AG04449 (cell line): ENCODE measurements at regions of chr12 and their contacts with region 1.

Region 1: DNA sequence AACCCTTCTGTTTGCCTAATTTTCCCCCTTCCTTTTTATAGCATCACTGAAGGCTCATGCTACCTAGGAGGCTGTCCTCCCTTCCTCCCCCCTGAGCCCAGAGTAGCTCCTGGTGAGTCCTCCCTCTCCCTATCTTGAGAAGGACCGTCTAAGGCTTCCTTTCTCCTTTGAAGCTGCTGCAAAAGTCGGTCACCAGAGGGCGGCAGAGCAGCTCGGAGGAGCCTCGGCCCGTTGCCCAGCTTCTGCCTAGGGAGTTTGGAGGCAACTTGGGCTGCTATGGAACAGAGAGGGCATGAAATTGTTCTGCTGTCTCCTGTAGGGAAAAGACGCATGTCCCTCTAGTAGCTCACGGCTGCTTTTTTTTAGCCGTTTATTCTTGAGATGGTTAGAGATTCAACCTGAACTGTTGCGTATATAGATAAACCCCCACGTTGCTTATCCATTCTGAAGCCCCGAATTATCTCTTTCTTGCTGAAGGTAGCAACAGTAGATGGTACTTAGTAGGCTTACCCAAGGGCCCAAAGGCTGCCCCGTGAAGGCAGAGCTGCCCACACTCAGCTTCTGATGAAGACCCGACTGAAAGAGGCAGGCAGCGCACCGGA is 5.7 kb downstream of the WNT5B start:
- DNase-seq: no peak
- H3K4me3 ChIP-seq: no peak overlapping the region
- CTCF ChIP-seq: peak; percentile 94

Region 2: DNA sequence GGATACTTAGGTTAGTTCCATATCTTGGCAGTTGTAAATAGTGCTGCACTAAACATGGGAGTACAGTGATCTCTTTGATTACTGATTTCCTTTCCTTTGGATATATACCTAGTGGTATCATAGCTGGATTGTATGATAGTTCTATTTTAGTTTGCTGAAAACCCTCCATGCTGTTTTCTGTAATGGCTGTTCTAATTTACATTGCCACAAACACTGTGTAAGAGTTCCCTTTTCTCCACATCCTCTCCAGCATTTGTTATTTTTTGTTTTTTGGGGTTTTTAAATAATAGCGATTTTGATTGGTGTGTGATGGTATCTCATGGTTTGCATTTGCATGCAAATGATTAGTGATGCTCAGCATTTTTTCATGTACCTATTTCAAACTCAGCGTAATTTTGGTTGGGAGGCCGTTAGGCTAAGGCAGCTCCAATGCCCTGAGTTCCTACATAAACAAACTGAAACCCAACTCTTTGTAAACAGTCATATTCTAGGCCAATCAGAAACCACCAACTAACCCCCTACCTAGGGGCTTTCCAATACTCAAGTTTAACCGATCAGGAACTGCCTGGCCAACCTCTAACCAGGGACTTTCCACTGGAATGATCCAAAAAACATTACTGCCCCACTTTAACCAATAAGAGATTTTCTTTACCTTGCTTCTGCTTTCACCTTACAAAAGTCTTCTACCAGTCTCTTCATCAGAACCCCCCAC is 211.9 kb before region 1 on chr12:
- CTCF ChIA-PET with region 1: no interaction called
- POLR2A ChIA-PET with region 1: no interaction called
- DNase-seq: no peak
- H3K4me3 ChIP-seq: no peak overlapping the region
- CTCF ChIP-seq: no peak

Region 3: GRCh38 chr12:1611803-1612572 is 22.7 kb before region 1 on chr12:
- CTCF ChIA-PET with region 1: interaction called, 16 read pairs
- POLR2A ChIA-PET with region 1: no interaction called
- DNase-seq: peak; percentile 69
- H3K4me3 ChIP-seq: peak overlapping the region; percentile 46
- CTCF ChIP-seq: no peak

Region 4: DNA sequence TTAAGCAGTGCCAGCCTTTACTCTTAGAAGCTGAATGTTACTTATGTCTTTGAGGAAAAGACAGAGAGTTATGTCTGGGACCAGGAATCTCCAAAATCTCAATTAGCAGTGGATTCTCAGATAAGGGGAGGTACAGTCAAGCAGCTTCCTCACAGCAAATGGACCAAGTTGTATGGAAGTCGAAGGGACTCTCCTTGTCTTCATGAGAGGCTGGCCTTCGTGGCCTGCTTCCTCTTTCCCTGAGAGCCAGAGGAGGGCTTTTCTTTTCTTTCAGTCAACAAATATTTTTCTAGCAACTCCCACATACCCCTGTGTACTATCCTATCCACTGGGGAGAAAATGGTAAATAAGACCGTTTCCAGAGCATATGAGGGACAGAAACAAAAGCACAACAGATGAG is 12.3 kb before region 1 on chr12:
- CTCF ChIA-PET with region 1: interaction called, 38 read pairs
- POLR2A ChIA-PET with region 1: no interaction called
- DNase-seq: no peak
- H3K4me3 ChIP-seq: no peak overlapping the region
- CTCF ChIP-seq: no peak

Region 5: GRCh38 chr12:1644534-1645438 is 10.1 kb after region 1 on chr12:
- CTCF ChIA-PET with region 1: interaction called, 223 read pairs
- POLR2A ChIA-PET with region 1: no interaction called
- DNase-seq: no peak
- H3K4me3 ChIP-seq: no peak overlapping the region
- CTCF ChIP-seq: no peak

Region 6: DNA sequence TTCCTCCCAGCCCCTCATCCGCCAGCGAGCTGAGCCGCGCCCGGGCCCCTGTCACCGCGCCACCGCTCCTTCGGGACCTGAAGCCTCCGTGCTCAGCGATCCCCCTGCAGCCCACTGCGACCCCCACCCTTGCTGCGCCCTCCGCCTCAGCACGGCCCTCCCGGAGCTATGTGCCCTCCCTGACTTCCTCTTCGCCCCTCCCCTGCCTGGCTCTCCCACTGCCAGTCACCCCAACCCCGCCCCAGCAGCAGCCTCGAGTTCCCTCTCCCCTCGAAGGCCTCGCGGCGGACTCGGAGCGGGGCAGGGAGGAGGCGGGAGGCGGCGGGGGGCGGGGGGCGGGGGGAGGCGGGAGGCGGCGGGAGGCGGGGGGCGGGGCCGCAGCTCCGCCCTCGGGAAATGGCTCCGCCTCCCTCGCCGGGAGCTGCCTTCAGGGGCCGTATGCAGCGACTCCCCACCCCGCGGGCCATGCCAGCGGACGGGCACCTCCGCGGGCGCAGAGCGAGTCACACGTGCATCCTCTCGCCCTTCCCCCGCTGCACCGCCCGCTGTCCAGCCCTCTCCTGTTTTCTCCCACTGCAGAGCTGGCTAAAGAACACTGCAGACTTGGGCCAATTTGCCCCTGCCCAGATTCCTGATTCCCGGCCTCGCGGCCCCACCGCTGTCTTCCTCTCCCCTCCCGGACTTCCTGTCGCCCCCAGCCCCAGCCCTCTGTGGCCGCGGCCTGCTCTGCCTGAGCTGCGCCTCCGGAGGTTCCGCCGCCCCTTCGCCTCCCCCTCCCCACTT is 27.1 kb after region 1 on chr12:
- CTCF ChIA-PET with region 1: interaction called, 223 read pairs
- POLR2A ChIA-PET with region 1: no interaction called
- DNase-seq: peak; percentile 57
- H3K4me3 ChIP-seq: peak overlapping the region; percentile 53
- CTCF ChIP-seq: no peak

Region 7: DNA sequence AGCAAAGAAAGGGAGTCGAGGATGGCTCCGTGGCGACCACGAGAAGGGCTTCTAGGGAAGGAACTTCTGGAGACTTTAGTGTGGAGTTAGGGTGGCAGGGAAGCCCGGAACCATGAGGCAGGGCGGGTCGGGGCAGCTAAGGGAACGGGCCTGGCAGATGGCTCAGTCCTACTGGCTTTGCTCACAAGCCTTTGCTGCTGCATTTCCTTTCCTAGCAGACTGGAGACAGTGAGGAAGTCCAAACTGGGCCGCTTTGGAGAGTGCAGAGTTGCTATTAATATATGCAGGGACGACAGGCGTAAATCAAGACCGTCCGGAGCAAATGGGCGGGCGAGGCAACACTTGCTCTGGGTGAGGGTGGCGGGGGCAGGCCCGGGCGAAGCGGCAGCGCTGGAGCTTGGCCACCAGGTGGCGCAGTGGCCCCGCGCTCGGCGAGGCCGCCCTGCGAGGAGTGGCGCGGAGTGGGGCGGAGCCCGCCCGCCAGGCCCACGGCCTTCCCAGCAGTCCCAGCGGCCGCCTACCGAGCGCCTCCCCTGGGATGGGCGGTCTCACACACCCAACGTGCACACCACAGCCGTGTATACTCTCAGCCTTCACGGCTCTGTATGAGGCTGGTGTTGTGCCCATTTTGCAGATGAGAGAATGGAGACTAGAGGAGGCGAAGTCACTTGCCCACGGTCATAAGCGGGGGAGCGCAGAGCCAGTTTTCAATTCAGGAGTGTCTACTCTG is 161.3 kb after region 1 on chr12:
- CTCF ChIA-PET with region 1: interaction called, 269 read pairs
- POLR2A ChIA-PET with region 1: no interaction called
- DNase-seq: no peak
- H3K4me3 ChIP-seq: peak overlapping the region; percentile 47
- CTCF ChIP-seq: peak; percentile 88